K562 (cell line): ENCODE measurements at regions of chr7 and their contacts with region 1.

Region 1: GRCh38 chr7:81499262-81500116 is 270.4 kb downstream of the HGF start:
- DNase-seq: peak in 2 of 4 experiments; percentile 15 to 50
- ATAC-seq: peak; percentile 42; the same call in 1 of the 3 replicates
- H3K4me3 ChIP-seq: no peak overlapping the region
- H3K27ac ChIP-seq: no peak overlapping the region
- H3K4me1 ChIP-seq: no peaks in the 10 kb centered on the region
- H3K27me3 ChIP-seq: no peaks in the 10 kb centered on the region
- CTCF ChIP-seq: peak in 2 of 3 experiments; percentile 28 to 41; a peak in 2 of 6 replicates
- EP300 ChIP-seq: no peak
- POLR2A ChIP-seq: no peak
- RAD21 ChIP-seq: peak; percentile 40 to 61

Region 2: GRCh38 chr7:81525841-81526240 is 26.4 kb after region 1 on chr7:
- CTCF ChIA-PET with region 1: no interaction called
- POLR2A ChIA-PET with region 1: no interaction called
- in situ Hi-C with region 1: no loop called
- intact Hi-C with region 1: no loop called
- DNase-seq: no peak
- ATAC-seq: no peak
- H3K4me3 ChIP-seq: no peak overlapping the region
- H3K27ac ChIP-seq: no peak overlapping the region
- H3K4me1 ChIP-seq: no peaks in the 10 kb centered on the region
- H3K27me3 ChIP-seq: no peaks in the 10 kb centered on the region
- CTCF ChIP-seq: no peak
- EP300 ChIP-seq: no peak
- POLR2A ChIP-seq: no peak
- RAD21 ChIP-seq: no peak

Region 3: GRCh38 chr7:81549484-81550016 is 50.1 kb after region 1 on chr7:
- CTCF ChIA-PET with region 1: no interaction called
- POLR2A ChIA-PET with region 1: no interaction called
- in situ Hi-C with region 1: no loop called
- intact Hi-C with region 1: no loop called
- DNase-seq: no peak
- ATAC-seq: no peak
- H3K4me3 ChIP-seq: no peak overlapping the region
- H3K27ac ChIP-seq: no peak overlapping the region
- H3K4me1 ChIP-seq: no peaks in the 10 kb centered on the region
- H3K27me3 ChIP-seq: no peaks in the 10 kb centered on the region
- CTCF ChIP-seq: no peak
- EP300 ChIP-seq: no peak
- POLR2A ChIP-seq: no peak
- RAD21 ChIP-seq: no peak

Region 4: DNA sequence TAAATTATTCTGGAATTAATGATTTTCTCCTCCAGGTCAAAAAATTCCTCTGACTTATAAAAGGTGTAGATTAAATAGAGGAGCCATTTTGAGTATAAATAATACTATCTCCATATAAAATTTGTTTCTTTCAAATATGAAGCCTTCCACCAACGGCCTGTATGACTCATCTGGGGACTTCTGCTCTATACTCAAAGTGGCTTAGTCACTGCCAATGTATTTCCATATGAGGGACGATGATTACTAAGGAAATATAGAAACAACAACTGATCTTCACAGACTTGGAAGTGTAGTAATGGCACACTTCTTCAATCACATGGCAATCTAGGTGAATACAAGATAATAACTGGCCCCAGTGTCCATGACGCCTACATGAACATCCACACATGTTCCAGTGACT is 606.0 kb after region 1 on chr7:
- CTCF ChIA-PET with region 1: no interaction called
- POLR2A ChIA-PET with region 1: no interaction called
- in situ Hi-C with region 1: no loop called
- intact Hi-C with region 1: no loop called
- DNase-seq: no peak
- ATAC-seq: no peak
- H3K4me3 ChIP-seq: no peak overlapping the region
- H3K27ac ChIP-seq: no peak overlapping the region
- H3K4me1 ChIP-seq: no peaks in the 10 kb centered on the region
- H3K27me3 ChIP-seq: no peaks in the 10 kb centered on the region
- CTCF ChIP-seq: no peak
- EP300 ChIP-seq: no peak
- POLR2A ChIP-seq: no peak
- RAD21 ChIP-seq: no peak

Region 5: GRCh38 chr7:82572195-82572880 is 1072.8 kb after region 1 on chr7:
- CTCF ChIA-PET with region 1: no interaction called
- POLR2A ChIA-PET with region 1: no interaction called
- in situ Hi-C with region 1: loop called (anchors 25 kb)
- intact Hi-C with region 1: no loop called
- DNase-seq: peak; percentile 60 to 74 (median 64)
- ATAC-seq: peak; percentile 78
- H3K4me3 ChIP-seq: no peak overlapping the region
- H3K27ac ChIP-seq: no peak overlapping the region
- H3K4me1 ChIP-seq: no peaks in the 10 kb centered on the region
- H3K27me3 ChIP-seq: no peaks in the 10 kb centered on the region
- CTCF ChIP-seq: peak; percentile 64 to 69 (median 68)
- EP300 ChIP-seq: no peak
- POLR2A ChIP-seq: no peak
- RAD21 ChIP-seq: peak; percentile 42 to 72

Region 6: GRCh38 chr7:82605247-82605872 is 1105.9 kb after region 1 on chr7:
- CTCF ChIA-PET with region 1: interaction called, 3 read pairs
- POLR2A ChIA-PET with region 1: no interaction called
- in situ Hi-C with region 1: no loop called
- intact Hi-C with region 1: loop called (anchors 2 kb)
- DNase-seq: peak; percentile 29 to 47 (median 43)
- ATAC-seq: 0 out of 3 replicates have a peak, but pooled peaks have one; percentile 31
- H3K4me3 ChIP-seq: no peak overlapping the region
- H3K27ac ChIP-seq: no peak overlapping the region
- H3K4me1 ChIP-seq: no peaks in the 10 kb centered on the region
- H3K27me3 ChIP-seq: no peaks in the 10 kb centered on the region
- CTCF ChIP-seq: peak; percentile 42 to 75 (median 59); a peak in 5 of 6 replicates
- EP300 ChIP-seq: no peak
- POLR2A ChIP-seq: no peak
- RAD21 ChIP-seq: peak; percentile 48 to 76

Region 7: GRCh38 chr7:82740246-82740848 is 1240.9 kb after region 1 on chr7:
- CTCF ChIA-PET with region 1: no interaction called
- POLR2A ChIA-PET with region 1: no interaction called
- in situ Hi-C with region 1: loop called (anchors 25 kb)
- intact Hi-C with region 1: no loop called
- DNase-seq: peak in 2 of 4 experiments; percentile 12 to 25
- ATAC-seq: no peak
- H3K4me3 ChIP-seq: no peak overlapping the region
- H3K27ac ChIP-seq: no peak overlapping the region
- H3K4me1 ChIP-seq: no peaks in the 10 kb centered on the region
- H3K27me3 ChIP-seq: no peaks in the 10 kb centered on the region
- CTCF ChIP-seq: peak in 2 of 3 experiments; percentile 23 to 35; a peak in 2 of 6 replicates
- EP300 ChIP-seq: no peak
- POLR2A ChIP-seq: no peak
- RAD21 ChIP-seq: no peak